Heart right ventricle (tissue), 16 donors: ENCODE measurements at regions of chr17 and their contacts with region 1.

Region 1: DNA sequence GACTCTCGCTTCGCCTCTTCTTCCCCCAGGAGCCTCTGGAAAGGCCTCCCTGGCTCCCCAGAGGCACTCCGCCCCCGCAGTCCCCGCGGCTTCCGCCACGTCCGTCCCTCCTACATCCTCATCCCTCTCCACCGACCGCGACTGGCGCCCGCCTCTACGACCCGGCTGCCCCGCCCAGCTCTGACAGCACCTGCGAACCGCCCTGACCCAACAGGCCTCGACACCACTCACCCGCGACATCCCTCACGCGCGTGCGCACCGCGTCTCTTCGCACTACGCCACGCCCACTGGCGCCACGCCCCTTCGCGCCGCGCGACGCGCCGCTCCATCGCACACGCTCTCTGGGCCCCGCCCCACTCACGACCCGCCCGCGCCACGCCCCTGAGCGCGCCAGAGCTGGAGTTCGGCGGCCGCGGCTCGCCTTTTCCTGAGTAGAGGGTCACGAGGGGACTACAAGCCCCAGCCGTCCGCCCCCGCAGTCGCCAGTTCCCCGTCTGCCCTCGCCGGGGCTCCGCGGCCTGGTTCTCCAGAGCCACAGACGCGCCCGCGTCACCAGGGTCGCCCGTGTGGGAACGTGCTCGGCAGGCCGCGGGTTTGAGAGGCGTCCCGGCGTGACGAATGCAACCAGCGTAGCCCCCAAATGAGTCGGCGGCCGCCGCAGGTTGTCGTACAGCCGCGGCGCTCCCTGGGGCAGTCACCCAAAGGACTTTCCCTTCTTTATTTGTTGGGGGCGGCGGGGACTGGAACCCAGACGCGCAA is 56.2 kb upstream of the LRRC37A3 start:
- DNase-seq: peak; percentile 93 to 97
- ATAC-seq: peak; percentile 97 to 99 (median 97)
- H3K4me3 ChIP-seq: peak overlapping the region; percentile 63 to 92 (median 80)
- H3K27ac ChIP-seq: peak overlapping the region; percentile 91 to 100 (median 96)
- H3K4me1 ChIP-seq: peaks cover 2 to 32% (median 12%) of the 10 kb centered on the region in 9 donors
- H3K27me3 ChIP-seq: no peaks in the 10 kb centered on the region
- CTCF ChIP-seq: no peak

Region 2: GRCh38 chr17:64005734-64006167 is 969.8 kb before region 1 on chr17:
- intact Hi-C with region 1: no loop called
- DNase-seq: no peak
- ATAC-seq: peak in 2 of 8 donors; percentile 4
- H3K4me3 ChIP-seq: peak overlapping the region; percentile 18 to 59 (median 45)
- H3K27ac ChIP-seq: peak overlapping the region; percentile 65 to 90 (median 84)
- H3K4me1 ChIP-seq: peaks cover 2 to 85% (median 65%) of the 10 kb centered on the region in 9 donors
- H3K27me3 ChIP-seq: no peaks in the 10 kb centered on the region
- CTCF ChIP-seq: no peak

Region 3: DNA sequence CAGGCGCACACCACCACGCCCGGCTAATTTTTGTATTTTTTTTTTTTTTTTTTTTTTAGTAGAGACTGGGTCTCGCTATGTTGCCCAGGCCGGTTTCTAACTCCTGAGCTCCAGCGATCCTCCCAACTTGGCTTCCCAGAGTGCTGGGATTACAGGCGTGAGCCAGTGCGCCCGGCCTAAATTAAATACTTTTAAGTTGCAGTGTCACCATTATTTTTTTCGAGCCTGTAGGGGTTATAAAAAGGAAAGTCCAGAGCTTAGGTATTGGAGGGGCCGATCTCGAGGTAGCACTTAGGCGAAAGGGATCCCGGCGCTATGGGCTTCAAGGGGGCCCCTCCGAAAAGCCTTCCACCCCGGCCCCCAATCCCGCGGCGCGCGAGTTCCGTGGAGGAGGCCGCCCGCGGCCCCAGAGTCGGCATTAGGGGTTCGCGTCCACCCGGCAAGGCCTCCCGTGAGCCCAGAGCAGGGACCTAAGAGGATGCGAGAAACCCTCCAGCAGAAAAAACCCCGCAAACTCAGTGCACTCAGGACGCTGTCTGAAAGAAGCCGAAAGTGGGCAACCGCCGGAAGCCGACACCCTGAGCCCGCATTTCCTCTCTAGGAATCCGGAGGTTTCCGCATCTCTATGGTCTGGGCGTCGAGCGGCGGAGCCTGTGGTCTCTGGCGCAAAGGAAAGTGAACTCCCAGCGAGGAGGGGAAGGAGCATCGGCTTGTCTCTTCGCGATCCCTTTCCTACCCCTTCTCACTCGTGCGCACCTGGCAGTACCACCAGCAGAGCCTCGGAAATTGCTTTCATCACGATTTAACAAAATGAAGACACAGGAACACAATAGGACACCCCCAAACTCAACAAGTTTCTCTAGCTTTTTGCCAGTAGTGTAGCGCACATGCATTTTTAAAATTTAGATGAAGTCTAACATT is 147.6 kb after region 1 on chr17:
- intact Hi-C with region 1: loop called in 1 of 10 experiments (anchors 5 kb)
- DNase-seq: peak; percentile 75 to 89
- ATAC-seq: peak; percentile 90 to 98 (median 92)
- H3K4me3 ChIP-seq: peak overlapping the region; percentile 58 to 82 (median 70)
- H3K27ac ChIP-seq: peak overlapping the region; percentile 75 to 98 (median 90)
- H3K4me1 ChIP-seq: peaks cover 0 to 17% (median 5%) of the 10 kb centered on the region in 9 donors
- H3K27me3 ChIP-seq: no peaks in the 10 kb centered on the region
- CTCF ChIP-seq: no peak